Mammary epithelial cell (primary cell): ENCODE measurements at regions of chr9 and their contacts with region 1.

Region 1: DNA sequence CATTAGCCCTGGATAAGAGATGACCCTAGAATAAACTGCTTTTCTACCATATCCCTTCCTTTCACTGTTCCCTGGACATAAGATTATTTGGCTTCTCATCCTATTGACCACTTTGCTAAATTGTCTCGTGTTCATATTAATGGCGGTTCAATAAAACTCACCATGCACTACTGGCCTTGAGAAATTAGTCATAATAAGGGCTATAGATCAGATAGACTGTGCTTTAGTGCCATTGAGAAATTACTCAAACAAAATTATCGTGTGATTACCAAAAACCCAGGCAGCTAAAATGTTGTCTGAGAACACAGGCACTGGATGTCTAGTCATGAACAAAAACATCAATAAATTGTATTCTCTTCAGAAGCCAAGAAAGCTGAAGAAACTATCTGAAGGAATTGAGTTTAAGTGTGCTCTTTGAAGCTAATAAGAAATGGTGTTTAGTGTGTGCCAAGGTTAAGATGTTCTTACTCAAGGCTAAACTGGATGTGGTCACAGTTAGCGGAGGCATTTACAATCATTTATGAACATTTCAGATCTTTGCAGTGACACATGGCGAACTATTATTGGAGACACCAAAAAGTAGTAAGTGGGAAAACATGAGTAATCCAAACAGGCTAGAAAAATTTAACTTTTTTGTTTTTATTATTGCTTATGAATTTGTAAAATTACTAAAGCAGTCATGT is 460.4 kb upstream of the RORB start:
- DNase-seq: no peak
- H3K4me3 ChIP-seq: no peak overlapping the region
- H3K27ac ChIP-seq: no peak overlapping the region
- H3K4me1 ChIP-seq: no peaks in the 10 kb centered on the region
- H3K27me3 ChIP-seq: no peaks in the 10 kb centered on the region
- CTCF ChIP-seq: no peak

Region 2: DNA sequence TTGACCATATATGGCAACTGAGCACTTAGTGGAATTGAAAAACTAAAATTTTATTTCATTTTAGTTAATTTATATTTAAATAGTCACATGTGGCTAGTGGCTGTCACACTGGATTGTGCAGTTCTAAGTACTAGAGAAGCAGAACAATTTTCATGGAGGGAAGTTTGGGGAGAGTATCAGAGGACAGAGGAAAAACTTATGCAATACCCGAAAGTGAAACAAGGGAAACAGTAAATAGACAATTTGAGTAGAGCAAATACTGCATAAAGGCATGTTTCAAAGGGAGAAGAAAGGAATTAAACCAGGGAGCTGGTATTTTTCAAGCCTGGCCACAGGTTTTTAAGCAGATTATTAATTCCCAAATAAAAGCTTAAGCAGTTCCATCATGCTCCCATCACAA is 130.0 kb before region 1 on chr9:
- CTCF ChIA-PET with region 1: interaction called, 11 read pairs
- dilution Hi-C with region 1: no loop called
- in situ Hi-C with region 1: no loop called
- intact Hi-C with region 1: no loop called
- DNase-seq: no peak
- H3K4me3 ChIP-seq: no peak overlapping the region
- H3K27ac ChIP-seq: no peak overlapping the region
- H3K4me1 ChIP-seq: no peaks in the 10 kb centered on the region
- H3K27me3 ChIP-seq: no peaks in the 10 kb centered on the region
- CTCF ChIP-seq: no peak

Region 3: GRCh38 chr9:73923796-73924195 is 112.9 kb before region 1 on chr9:
- CTCF ChIA-PET with region 1: no interaction called
- dilution Hi-C with region 1: no loop called
- in situ Hi-C with region 1: loop called in 1 of 2 experiments (anchors 25 kb)
- intact Hi-C with region 1: no loop called
- DNase-seq: no peak
- H3K4me3 ChIP-seq: no peak overlapping the region
- H3K27ac ChIP-seq: no peak overlapping the region
- H3K4me1 ChIP-seq: no peaks in the 10 kb centered on the region
- H3K27me3 ChIP-seq: no peaks in the 10 kb centered on the region
- CTCF ChIP-seq: no peak